H1 (cell line): ENCODE measurements at regions of chr7 and their contacts with region 1.

Region 1: GRCh38 chr7:101363734-101364374 is 1.2 kb downstream of the COL26A1 start:
- DNase-seq: peak in 1 of 2 experiments; percentile 89
- H3K4me3 ChIP-seq: peak overlapping the region; percentile 64 to 84 (median 73)
- H3K27ac ChIP-seq: peak overlapping the region; percentile 86; the same call in 1 of the 2 replicates
- H3K4me1 ChIP-seq: peaks cover 0 to 3% (median 2%) of the 10 kb centered on the region in 4 experiments; a peak in 3 of 7 replicates
- H3K27me3 ChIP-seq: no peaks in the 10 kb centered on the region; a peak in 1 of 7 replicates
- CTCF ChIP-seq: peak; percentile 73 to 94 (median 74)
- EP300 ChIP-seq: no peak
- POLR2A ChIP-seq: peak; percentile 41 to 73
- RAD21 ChIP-seq: peak; percentile 76 to 86

Region 2: GRCh38 chr7:101347477-101347876 is 16.4 kb before region 1 on chr7:
- CTCF ChIA-PET with region 1: interaction called, 4 read pairs
- POLR2A ChIA-PET with region 1: interaction called, 17 read pairs
- DNase-seq: no peak
- H3K4me3 ChIP-seq: no peak overlapping the region
- H3K27ac ChIP-seq: no peak overlapping the region
- H3K4me1 ChIP-seq: no peaks in the 10 kb centered on the region
- H3K27me3 ChIP-seq: no peaks in the 10 kb centered on the region
- CTCF ChIP-seq: no peak
- EP300 ChIP-seq: no peak
- POLR2A ChIP-seq: no peak
- RAD21 ChIP-seq: no peak

Region 3: DNA sequence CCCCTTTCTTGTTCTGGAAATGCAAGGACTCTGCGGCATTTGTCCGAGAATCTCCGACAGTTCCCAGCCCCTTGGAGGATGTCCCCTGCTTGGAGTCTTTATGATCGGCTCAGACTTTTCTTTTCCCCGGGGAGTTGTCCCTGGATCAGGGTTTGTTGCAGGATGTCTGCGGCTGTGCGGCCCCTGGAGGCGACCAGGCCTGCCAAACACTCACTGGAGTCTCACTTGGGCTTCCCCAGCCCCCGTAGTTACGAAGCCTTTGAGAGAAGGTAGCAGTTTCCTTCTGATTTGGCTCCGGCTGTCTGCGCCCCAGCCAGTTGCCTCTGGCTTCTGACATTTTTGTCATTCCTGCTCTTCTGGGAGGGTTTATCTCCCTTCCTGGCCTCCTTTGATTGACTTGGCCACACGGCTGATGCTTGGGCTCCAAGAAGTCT is 14.9 kb after region 1 on chr7:
- CTCF ChIA-PET with region 1: interaction called, 33 read pairs
- POLR2A ChIA-PET with region 1: interaction called, 29 read pairs
- DNase-seq: peak in 1 of 2 experiments; percentile 70
- H3K4me3 ChIP-seq: no peak overlapping the region
- H3K27ac ChIP-seq: no peak overlapping the region
- H3K4me1 ChIP-seq: peaks cover 0 to 11% (median 7%) of the 10 kb centered on the region in 4 experiments; a peak in 5 of 7 replicates
- H3K27me3 ChIP-seq: no peaks in the 10 kb centered on the region
- CTCF ChIP-seq: peak in 2 of 3 experiments; percentile 8 to 18; a peak in 2 of 4 replicates
- EP300 ChIP-seq: no peak; a peak in 1 of 3 replicates
- POLR2A ChIP-seq: no peak
- RAD21 ChIP-seq: peak; percentile 6 to 14; a peak in 2 of 4 replicates

Region 4: GRCh38 chr7:101436857-101437576 is 73.2 kb after region 1 on chr7:
- CTCF ChIA-PET with region 1: interaction called, 13 read pairs
- POLR2A ChIA-PET with region 1: interaction called, 7 read pairs
- DNase-seq: peak; percentile 44 to 91
- H3K4me3 ChIP-seq: no peak overlapping the region
- H3K27ac ChIP-seq: no peak overlapping the region
- H3K4me1 ChIP-seq: peaks cover 4 to 19% (median 11%) of the 10 kb centered on the region in 4 experiments
- H3K27me3 ChIP-seq: no peaks in the 10 kb centered on the region
- CTCF ChIP-seq: no peak
- EP300 ChIP-seq: no peak
- POLR2A ChIP-seq: no peak
- RAD21 ChIP-seq: no peak